ENCODE measurements at regions of chrX and their contacts with region 1.

Region 1: DNA sequence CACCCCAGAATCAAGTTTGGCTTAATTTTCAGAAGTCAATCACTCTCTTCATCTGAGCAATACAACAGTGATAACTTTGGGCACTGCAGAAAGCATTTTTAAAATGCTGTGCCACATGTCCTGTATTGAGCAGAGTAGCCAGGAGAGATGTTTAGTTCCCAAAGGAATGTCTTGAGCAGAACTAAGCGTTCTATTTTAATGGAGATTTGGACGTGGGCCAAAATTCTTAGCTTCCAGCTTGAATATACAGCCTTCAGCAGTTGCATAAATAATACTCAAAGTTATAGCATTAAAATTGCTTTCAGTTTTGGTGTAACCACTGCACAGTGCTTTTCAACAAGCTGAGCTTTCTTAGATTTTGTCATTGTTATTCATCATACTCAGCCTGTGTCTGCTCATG is 679.2 kb downstream of the NLGN4X start:
- DNase-seq: no peak
- H3K4me3 ChIP-seq: no peak overlapping the region
- H3K27ac ChIP-seq: no peak overlapping the region
- H3K4me1 ChIP-seq: no peaks in the 10 kb centered on the region
- H3K27me3 ChIP-seq: no peaks in the 10 kb centered on the region
- CTCF ChIP-seq: no peak
- POLR2A ChIP-seq: no peak

Region 2: DNA sequence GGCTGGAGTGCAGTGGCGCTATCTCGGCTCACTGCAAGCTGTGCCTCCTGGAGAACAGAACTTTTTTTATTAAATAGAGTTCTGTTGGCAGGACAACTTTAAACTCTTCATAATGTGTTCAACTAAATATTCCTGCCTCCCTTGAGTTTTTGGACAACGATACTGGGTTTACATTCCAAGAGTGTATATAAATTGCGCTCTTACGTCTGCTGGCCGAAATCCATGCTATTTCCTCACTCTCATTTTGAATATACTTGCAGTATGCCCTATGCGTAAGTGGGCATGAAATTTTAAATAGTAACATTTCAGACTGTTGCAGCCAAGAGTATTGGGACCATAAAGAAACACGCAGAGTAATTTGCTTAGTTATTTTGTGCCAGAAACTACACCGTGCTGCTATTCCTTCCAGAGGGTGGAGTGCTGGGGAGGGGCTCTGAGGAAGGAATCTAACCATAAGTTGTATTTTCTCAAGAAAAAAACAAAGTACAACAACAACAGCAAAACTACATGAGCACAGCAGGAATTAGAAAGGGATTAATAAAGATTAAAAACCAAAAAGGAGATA is 199.2 kb after region 1 on chrX:
- intact Hi-C with region 1: no loop called
- DNase-seq: no peak
- H3K4me3 ChIP-seq: no peak overlapping the region
- H3K27ac ChIP-seq: no peak overlapping the region
- H3K4me1 ChIP-seq: no peaks in the 10 kb centered on the region
- H3K27me3 ChIP-seq: no peaks in the 10 kb centered on the region
- CTCF ChIP-seq: no peak
- POLR2A ChIP-seq: no peak

Region 3: GRCh38 chrX:5869786-5870185 is 320.3 kb after region 1 on chrX:
- intact Hi-C with region 1: loop called (anchors 10 kb)
- DNase-seq: no peak
- H3K4me3 ChIP-seq: no peak overlapping the region
- H3K27ac ChIP-seq: no peak overlapping the region
- H3K4me1 ChIP-seq: no peaks in the 10 kb centered on the region
- H3K27me3 ChIP-seq: peaks cover 0 to 5% of the 10 kb centered on the region in 2 donors
- CTCF ChIP-seq: no peak
- POLR2A ChIP-seq: no peak

Region 4: DNA sequence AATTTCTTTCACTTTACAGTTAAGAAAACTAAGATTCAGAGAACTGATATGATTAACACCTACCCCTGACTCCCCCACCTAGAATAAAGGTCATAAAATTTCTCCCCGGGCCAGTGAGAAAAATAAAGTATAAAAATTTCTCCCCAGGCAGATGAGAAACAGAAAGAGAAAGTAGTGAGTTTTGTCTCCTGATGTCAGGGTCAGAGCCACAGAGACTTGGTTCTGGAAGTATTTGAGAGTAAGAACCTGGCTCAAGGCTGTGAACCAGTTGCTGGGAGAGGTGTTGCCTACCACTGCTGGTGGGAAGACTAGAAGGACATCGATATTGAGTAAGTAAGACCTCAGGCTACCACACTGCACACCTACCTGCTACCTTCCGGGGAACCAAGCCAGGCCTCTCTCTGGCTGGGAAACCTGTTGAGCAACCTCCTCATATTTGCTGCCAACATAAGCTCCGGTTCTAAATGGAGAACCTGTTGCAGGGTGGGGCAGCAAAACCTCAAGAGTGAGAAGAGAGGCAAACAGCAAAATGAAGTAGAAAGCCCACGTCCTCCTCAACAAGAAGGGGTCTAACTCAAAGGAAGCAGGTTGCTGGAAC is 1702.6 kb after region 1 on chrX:
- intact Hi-C with region 1: no loop called
- DNase-seq: peak; percentile 61 to 86
- H3K4me3 ChIP-seq: no peak overlapping the region
- H3K27ac ChIP-seq: peak overlapping the region; percentile 33 to 72
- H3K4me1 ChIP-seq: no peaks in the 10 kb centered on the region
- H3K27me3 ChIP-seq: no peaks in the 10 kb centered on the region
- CTCF ChIP-seq: no peak
- POLR2A ChIP-seq: no peak

Measured in breast epithelium (tissue), 4 donors.